ENCODE measurements at regions of chr5 and their contacts with region 1.

Region 1: GRCh38 chr5:149938791-149939358 is 5.7 kb downstream of the PDE6A start:
- DNase-seq: peak; percentile 90 to 98
- H3K4me3 ChIP-seq: peak overlapping the region; percentile 38; the same call in 1 of the 2 replicates
- H3K27ac ChIP-seq: peak overlapping the region; percentile 99
- H3K4me1 ChIP-seq: peaks cover 59% of the 10 kb centered on the region
- H3K27me3 ChIP-seq: no peaks in the 10 kb centered on the region
- CTCF ChIP-seq: no peak

Region 2: GRCh38 chr5:149605998-149606724 is 332.7 kb before region 1 on chr5:
- CTCF ChIA-PET with region 1: no interaction called
- POLR2A ChIA-PET with region 1: no interaction called
- intact Hi-C with region 1: loop called (anchors 2 kb)
- DNase-seq: peak; percentile 88 to 98
- H3K4me3 ChIP-seq: no peak overlapping the region; the same call in 1 of the 2 replicates
- H3K27ac ChIP-seq: peak overlapping the region; percentile 94
- H3K4me1 ChIP-seq: peaks cover 55% of the 10 kb centered on the region
- H3K27me3 ChIP-seq: no peaks in the 10 kb centered on the region
- CTCF ChIP-seq: no peak

Region 3: DNA sequence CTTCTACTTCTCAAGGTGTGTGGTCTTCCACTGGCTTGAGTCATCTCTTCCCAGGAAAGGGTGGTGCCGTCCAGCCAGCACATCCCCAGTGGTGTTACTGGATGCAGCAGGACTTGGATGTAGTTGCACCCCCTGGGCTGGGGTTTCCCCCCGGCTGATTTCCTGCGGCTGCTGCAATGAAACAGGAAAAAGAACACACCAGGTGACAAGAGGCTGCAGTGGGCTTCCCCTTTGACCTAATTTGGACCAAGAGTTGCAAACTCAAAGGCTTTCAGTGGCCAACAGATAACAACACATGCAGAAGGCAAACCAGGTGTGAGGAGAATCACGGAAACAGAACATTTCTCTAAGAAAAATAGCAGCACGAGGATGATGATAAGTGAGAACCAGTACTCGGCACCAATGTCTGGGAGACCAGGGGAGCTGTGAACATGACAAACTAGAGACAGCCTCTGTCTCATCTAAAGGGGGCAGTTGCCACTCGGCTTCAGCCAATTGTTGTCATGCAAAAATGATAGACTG is 78.0 kb before region 1 on chr5:
- CTCF ChIA-PET with region 1: no interaction called
- POLR2A ChIA-PET with region 1: no interaction called
- intact Hi-C with region 1: loop called (anchors 2 kb)
- DNase-seq: no peak
- H3K4me3 ChIP-seq: no peak overlapping the region
- H3K27ac ChIP-seq: no peak overlapping the region
- H3K4me1 ChIP-seq: no peaks in the 10 kb centered on the region
- H3K27me3 ChIP-seq: no peaks in the 10 kb centered on the region
- CTCF ChIP-seq: no peak

Region 4: DNA sequence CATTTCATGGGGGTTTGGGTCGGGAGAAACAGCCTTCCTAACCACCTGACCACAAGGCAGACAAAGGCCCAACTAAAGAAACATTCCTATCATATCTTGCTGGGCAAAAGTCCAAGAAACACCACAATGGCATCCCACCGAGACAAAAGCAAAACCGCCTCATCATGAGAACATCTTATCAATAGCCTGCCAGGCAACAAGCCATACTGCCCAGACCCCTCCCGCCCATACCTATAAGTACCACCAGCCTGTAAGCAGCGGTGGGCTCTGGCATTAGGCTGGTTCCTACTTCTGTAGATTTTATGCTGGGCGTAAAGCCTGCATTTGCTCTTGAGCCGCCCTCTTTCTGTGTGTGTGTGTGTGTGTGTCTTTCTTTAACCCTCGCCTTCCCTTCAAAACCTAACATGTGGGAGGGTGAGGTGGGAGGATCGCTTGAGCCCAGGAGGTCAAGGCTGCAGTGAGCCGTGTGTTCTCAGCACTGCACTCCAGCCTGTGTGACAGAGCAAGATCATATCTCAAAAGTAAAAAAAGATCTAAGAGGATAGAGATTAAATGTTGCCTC is 51.2 kb before region 1 on chr5:
- CTCF ChIA-PET with region 1: no interaction called
- POLR2A ChIA-PET with region 1: interaction called, 3 read pairs
- intact Hi-C with region 1: loop called (anchors 2 kb)
- DNase-seq: peak; percentile 58 to 68
- H3K4me3 ChIP-seq: no peak overlapping the region
- H3K27ac ChIP-seq: no peak overlapping the region
- H3K4me1 ChIP-seq: peaks cover 3% of the 10 kb centered on the region; the same call in 1 of the 2 replicates
- H3K27me3 ChIP-seq: no peaks in the 10 kb centered on the region
- CTCF ChIP-seq: no peak

Region 5: GRCh38 chr5:149913436-149914419 is 25.1 kb before region 1 on chr5:
- CTCF ChIA-PET with region 1: no interaction called
- POLR2A ChIA-PET with region 1: interaction called, 11 read pairs
- intact Hi-C with region 1: loop called (anchors 1 kb)
- DNase-seq: no peak
- H3K4me3 ChIP-seq: no peak overlapping the region
- H3K27ac ChIP-seq: no peak overlapping the region
- H3K4me1 ChIP-seq: peaks cover 52% of the 10 kb centered on the region
- H3K27me3 ChIP-seq: no peaks in the 10 kb centered on the region
- CTCF ChIP-seq: no peak

Measured in PC-9 (cell line).